Esophagus squamous epithelium (tissue), 5 donors: ENCODE measurements at regions of chr12 and their contacts with region 1.

Region 1: DNA sequence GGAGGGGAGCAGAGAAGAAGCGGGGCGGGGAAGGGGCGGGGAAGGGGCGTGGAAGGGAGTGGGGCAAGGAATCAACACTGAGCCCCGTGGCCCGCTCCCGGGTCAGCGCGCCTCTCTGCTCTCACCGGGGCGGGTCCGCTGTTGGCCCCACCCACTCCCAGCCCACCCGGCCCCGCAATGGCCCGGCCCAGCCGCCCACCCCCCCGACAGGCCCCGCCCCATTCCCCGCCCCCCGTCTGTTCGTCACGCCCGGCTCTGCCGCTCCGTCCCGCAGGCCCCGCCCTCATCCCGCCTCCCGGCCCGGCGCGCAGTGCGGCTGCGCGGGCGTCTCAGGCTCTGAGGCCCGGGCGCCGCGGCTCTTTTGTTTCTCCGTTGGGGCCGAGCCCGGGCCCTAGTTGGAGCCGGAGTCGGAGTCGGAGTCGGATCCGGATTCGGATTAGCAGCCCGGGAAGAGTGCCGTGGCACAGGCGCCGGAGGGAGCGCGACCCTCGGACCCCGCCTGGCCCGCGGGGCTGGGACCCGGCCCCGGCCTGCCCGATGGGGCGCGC is at the start of gene ULK1:
- DNase-seq: peak; percentile 41
- H3K4me3 ChIP-seq: peak within 1 kb of the TSS; percentile 50 to 86 (median 78)
- H3K27ac ChIP-seq: peak within 1 kb of the TSS; percentile 95 to 99 (median 98)
- H3K4me1 ChIP-seq: peaks cover 16 to 47% (median 19%) of the 10 kb centered on the region in 3 donors
- H3K27me3 ChIP-seq: no peaks in the 10 kb centered on the region
- CTCF ChIP-seq: no peak
- POLR2A ChIP-seq: peak in 3 of 4 donors; percentile 88 to 97 (median 92)
- total RNA-seq, gene ULK1: 9.1 to 55.0 (median 19.5) TPM

Region 2: DNA sequence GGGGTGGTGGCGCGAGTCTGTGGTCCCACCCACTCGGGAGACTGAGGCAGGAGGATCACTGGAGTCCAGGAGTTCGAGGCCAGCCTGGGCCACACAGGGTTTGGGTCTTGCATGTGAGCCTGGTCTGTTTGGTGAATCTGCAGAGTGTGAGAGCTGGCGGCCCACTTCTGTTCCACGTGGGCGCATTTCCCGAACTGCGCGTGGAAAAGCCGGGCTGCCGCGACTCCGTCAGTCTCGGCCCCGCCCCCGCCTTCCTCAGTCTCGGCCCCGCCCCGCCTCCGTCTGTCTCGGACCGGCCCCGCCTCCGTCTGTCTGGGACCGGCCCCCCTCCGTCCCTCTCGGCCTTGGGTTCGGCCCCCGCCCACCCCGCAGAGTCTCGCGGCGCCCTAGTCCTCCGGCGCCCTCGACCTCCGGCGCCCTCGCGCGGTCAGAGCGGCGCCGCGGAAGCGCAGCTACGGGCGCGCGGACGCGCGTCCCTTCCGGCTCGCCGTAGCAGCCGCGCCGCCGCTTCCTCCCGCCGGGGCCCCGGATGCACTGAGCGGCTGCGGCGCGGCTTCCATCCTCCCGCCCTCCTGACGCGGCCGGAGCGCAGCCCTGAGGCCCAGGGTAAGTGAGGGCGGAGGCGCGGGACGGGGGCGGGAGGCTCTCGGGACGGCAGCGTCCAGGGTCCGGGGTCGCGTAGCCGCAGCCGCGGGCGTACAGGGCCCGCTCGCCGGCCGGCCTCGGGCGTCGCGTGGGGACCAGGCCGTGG is 55.2 kb after region 1 on chr12 and contains the start of gene EP400:
- intact Hi-C with region 1: loop called (anchors 10 kb)
- DNase-seq: peak; percentile 59
- H3K4me3 ChIP-seq: peak within 1 kb of the TSS; percentile 77 to 100 (median 92)
- H3K27ac ChIP-seq: peak within 1 kb of the TSS; percentile 71 to 89 (median 86)
- H3K4me1 ChIP-seq: peaks cover 3 to 40% (median 19%) of the 10 kb centered on the region in 3 donors
- H3K27me3 ChIP-seq: no peaks in the 10 kb centered on the region
- CTCF ChIP-seq: peak; percentile 22 to 91 (median 70)
- POLR2A ChIP-seq: peak in 3 of 4 donors; percentile 44 to 56 (median 45)
- total RNA-seq, gene EP400: 10.1 to 23.0 (median 20.9) TPM

Region 3: DNA sequence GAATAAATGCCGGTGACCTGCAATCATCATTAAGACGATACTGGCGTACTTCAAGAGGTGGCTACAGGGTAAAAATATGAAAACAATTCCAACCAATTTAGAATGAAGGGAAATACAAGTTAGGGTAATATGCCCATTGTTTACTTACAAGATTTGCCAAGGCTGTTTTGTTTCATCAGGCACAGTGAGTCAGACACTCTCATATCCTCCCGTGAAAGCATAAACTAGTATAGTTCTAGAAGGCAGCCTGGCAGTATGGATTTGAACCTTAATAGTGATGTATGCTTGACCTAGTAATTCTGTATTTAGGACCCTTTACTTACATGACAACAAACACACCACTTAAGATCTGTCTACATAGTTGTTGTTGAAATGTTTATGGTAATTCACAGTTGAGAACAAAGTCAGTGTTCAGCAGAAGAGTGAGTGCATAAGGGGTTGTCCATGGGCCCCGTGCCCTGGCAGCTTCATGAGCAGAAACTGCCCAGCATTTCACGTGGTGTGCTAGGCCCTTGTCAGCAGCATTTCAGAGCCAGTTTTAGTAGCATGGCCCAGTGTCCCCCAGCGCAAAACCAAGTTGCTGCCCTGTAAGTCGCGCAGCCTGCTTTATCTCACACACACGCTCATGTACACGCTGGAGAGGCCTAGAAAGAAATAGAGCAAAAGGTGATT is 136.1 kb after region 1 on chr12:
- intact Hi-C with region 1: no loop called
- DNase-seq: no peak
- H3K4me3 ChIP-seq: no peak overlapping the region
- H3K27ac ChIP-seq: no peak overlapping the region
- H3K4me1 ChIP-seq: no peaks in the 10 kb centered on the region
- H3K27me3 ChIP-seq: no peaks in the 10 kb centered on the region
- CTCF ChIP-seq: no peak
- POLR2A ChIP-seq: no peak

Region 4: DNA sequence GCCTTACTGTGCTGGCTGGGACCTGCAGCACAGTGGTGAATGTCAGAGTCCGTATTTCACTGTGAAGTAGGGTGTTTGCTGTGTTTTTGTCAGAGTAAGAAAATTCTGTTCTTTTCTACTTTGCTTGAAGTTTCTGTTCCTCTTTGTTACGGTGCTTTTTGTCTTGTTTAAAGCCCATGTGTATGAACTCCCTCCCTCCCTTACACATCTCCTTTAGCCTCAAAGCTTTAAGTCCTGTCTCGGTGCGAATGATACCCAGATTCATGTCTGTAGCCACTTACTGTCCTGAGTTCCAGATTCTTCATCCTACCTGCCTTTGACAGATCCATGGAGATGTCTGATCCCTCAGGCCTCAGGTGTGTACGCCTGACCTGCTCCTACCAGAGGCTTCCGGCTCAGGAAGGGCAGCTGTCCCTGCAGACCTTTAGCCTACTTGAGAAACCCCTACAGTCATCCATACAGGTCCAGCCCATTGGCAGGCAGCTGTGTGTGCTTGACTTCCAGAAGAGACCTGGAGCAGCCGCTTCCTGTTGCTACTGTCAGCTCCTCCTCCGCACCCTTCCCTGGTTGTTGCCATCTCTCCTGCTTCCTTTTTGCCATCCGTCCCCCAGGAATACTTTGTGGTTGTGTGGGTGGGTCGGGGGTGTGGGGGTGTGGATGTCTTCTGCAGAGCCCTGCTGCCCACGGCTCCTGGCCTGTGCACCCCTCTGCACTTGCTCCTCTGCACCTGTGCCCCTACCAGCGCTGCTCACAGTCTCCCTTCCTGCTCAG is 176.8 kb after region 1 on chr12:
- intact Hi-C with region 1: no loop called
- DNase-seq: no peak
- H3K4me3 ChIP-seq: no peak overlapping the region
- H3K27ac ChIP-seq: peak overlapping the region in 1 of 4 donors; percentile 21
- H3K4me1 ChIP-seq: no peaks in the 10 kb centered on the region
- H3K27me3 ChIP-seq: no peaks in the 10 kb centered on the region
- CTCF ChIP-seq: no peak
- POLR2A ChIP-seq: no peak